HEK293 (cell line): ENCODE measurements at regions of chr9 and their contacts with region 1.

Region 1: GRCh38 chr9:1732670-1733069 is 282.5 kb upstream of the SMARCA2 start:
- H3K4me3 ChIP-seq: no peak overlapping the region
- H3K27ac ChIP-seq: no peak overlapping the region
- H3K4me1 ChIP-seq: no peaks in the 10 kb centered on the region
- CTCF ChIP-seq: no peak

Region 2: DNA sequence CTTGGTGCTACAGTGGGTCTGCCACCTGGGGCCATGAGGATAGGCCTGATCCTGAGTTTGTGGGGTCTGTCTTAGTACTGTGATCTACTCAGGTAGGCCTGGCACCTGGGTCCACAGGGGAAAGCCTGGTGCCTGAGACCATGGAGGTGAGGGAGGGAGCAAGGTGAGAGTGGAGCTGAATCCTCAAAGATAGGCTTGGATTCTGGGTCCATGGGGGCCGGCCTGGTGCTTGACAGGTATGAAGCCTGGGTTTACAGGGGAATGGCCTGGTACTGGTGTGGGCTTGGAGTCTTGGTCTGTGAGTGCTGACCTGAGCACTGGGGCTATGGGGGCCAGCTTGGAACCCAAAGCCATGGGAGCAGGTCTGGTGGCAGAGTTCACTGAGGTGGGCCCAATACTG is 156.7 kb before region 1 on chr9:
- CTCF ChIA-PET with region 1: no interaction called
- POLR2A ChIA-PET with region 1: no interaction called
- H3K4me3 ChIP-seq: no peak overlapping the region
- H3K27ac ChIP-seq: no peak overlapping the region
- H3K4me1 ChIP-seq: no peaks in the 10 kb centered on the region
- CTCF ChIP-seq: no peak

Region 3: DNA sequence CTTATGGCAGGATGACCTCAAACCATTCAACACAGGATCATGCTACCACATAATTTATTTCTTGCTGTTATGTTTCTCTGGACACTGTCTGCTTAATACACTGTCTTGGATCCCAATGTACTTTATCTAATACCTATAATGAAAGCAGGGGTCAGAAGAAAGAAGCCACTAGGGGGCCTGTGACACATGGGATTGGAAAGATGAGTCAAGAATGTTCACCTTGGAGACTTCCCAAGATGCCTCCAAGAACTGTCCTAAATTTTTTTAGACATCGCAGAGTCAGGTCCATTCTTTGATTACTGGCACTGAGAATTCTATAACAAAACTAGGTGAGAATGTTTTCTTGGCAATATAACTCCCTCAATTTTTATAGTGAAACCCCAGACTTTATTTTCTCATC is 23.3 kb before region 1 on chr9:
- CTCF ChIA-PET with region 1: interaction called, 20 read pairs
- POLR2A ChIA-PET with region 1: no interaction called
- H3K4me3 ChIP-seq: no peak overlapping the region
- H3K27ac ChIP-seq: no peak overlapping the region
- H3K4me1 ChIP-seq: no peaks in the 10 kb centered on the region
- CTCF ChIP-seq: no peak

Region 4: GRCh38 chr9:1718836-1719235 is 13.8 kb before region 1 on chr9:
- CTCF ChIA-PET with region 1: interaction called, 13 read pairs
- POLR2A ChIA-PET with region 1: no interaction called
- H3K4me3 ChIP-seq: no peak overlapping the region
- H3K27ac ChIP-seq: no peak overlapping the region
- H3K4me1 ChIP-seq: no peaks in the 10 kb centered on the region
- CTCF ChIP-seq: no peak

Region 5: DNA sequence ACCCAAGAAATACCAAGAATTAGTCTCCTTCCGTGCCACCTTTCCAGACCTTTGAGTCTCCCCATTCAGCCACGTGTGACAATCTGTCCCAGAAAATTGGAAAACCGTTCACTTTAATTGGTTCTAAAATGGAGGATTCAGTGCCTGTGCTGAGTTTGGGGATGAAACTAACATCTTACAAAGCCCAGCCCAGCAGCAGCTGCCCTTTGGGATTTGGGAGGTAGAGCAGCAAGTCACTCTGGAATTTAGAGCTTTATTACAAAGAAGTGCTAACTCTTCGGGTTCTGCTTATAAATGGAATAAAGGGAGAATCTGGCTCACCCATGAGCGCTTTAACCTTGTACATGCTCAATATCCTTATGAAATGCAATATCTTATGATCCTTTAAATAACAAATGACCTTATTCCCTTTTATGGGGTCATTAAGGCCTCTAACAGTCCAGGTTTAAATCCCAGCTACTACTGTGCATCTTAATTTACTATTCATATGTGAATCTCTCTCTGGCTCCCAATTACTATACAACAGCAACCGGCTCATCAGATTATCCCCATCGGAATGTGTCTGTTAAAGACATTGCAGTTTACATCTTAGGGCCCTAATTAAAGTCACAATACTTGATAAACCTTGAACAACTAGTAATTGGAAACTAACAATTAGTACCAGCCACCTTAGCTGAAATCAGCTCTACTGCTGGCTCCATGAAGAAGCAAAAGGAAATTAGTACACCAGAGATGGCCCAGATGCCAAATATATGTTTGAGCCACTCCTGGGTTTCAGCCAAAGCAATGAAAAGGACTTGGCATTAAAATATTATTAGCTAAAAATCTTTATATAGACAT is 10.7 kb after region 1 on chr9:
- CTCF ChIA-PET with region 1: interaction called, 12 read pairs
- POLR2A ChIA-PET with region 1: no interaction called
- H3K4me3 ChIP-seq: no peak overlapping the region
- H3K27ac ChIP-seq: no peak overlapping the region
- H3K4me1 ChIP-seq: no peaks in the 10 kb centered on the region
- CTCF ChIP-seq: no peak